Motor neuron (in vitro differentiated cells): ENCODE measurements at regions of chr2 and their contacts with region 1.

Region 1: GRCh38 chr2:74715078-74715791 is 61.2 kb downstream of the SEMA4F start:
- ATAC-seq: peak; percentile 90 to 98 (median 95)
- H3K4me3 ChIP-seq: peak overlapping the region; percentile 42 to 55 (median 50)
- H3K27ac ChIP-seq: no peak overlapping the region
- H3K4me1 ChIP-seq: no peaks in the 10 kb centered on the region

Region 2: GRCh38 chr2:74639543-74639942 is 75.7 kb before region 1 on chr2:
- in situ Hi-C with region 1: no loop called
- ATAC-seq: no peak
- H3K4me3 ChIP-seq: no peak overlapping the region
- H3K27ac ChIP-seq: no peak overlapping the region
- H3K4me1 ChIP-seq: no peaks in the 10 kb centered on the region

Region 3: GRCh38 chr2:74864846-74865722 is 149.8 kb after region 1 on chr2:
- in situ Hi-C with region 1: loop called in 4 of 9 experiments (anchors 10 to 25 kb)
- ATAC-seq: peak in 3 of 8 experiments; percentile 26 to 57 (median 53)
- H3K4me3 ChIP-seq: no peak overlapping the region
- H3K27ac ChIP-seq: no peak overlapping the region
- H3K4me1 ChIP-seq: no peaks in the 10 kb centered on the region

Region 4: GRCh38 chr2:74876081-74876886 is 161.0 kb after region 1 on chr2:
- in situ Hi-C with region 1: loop called in 6 of 9 experiments (anchors 10 to 25 kb)
- ATAC-seq: peak; percentile 66 to 94 (median 84)
- H3K4me3 ChIP-seq: no peak overlapping the region
- H3K27ac ChIP-seq: no peak overlapping the region
- H3K4me1 ChIP-seq: peaks cover 0 to 3% of the 10 kb centered on the region in 2 donors

Region 5: GRCh38 chr2:75710577-75711253 is 995.5 kb after region 1 on chr2 and contains the start of gene GCFC2:
- in situ Hi-C with region 1: no loop called
- ATAC-seq: peak; percentile 95 to 97 (median 96)
- H3K4me3 ChIP-seq: peak within 1 kb of the TSS; percentile 45 to 84 (median 49)
- H3K27ac ChIP-seq: peak within 1 kb of the TSS; percentile 73 to 91
- H3K4me1 ChIP-seq: peaks cover 9 to 11% of the 10 kb centered on the region in 2 donors
- total RNA-seq, gene GCFC2: 13.2 to 29.8 (median 15.9) TPM